Tibial artery (tissue), 4 donors: ENCODE measurements at regions of chr18 and their contacts with region 1.

Region 1: DNA sequence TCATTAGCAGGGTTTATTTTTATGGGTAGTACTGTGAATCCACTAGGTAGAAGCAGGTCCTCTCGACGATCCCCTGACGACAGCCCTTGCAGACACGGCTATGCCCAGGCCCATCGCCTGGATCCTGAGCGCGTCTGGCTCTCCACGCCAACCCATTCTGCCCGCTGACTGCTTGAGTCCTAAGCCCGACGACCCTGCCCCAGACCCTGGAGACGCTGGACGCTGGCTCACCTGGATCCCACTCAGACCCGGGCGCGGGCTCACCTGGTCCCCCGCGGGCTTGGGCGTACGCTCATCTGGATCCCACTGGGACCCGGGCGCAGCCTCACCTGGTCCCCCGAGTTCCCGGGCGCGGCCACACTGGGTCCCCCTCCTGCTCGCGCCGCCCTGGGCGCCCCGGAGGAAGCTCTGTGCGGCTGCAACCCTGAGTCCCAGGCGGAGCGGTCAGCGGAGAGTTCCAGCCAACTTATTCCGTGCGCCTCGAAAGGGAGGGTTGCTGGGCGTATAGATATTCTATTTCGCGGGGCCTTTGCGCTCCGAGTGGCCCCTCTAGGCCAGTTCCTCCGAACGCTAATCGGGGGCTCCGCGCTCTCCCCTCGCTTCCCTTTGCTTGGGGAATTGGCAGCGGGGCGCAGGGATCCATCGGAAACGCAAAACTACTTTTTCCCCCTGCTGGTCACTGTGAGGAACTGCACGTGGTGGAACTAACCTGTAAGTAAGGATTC is 22.4 kb upstream of the RMP24 start:
- DNase-seq: peak; percentile 26 to 70
- H3K4me3 ChIP-seq: peak overlapping the region; percentile 38 to 55
- H3K27ac ChIP-seq: no peak overlapping the region
- H3K4me1 ChIP-seq: peaks cover 0 to 8% (median 6%) of the 10 kb centered on the region in 4 donors
- H3K27me3 ChIP-seq: peaks cover 0 to 10% of the 10 kb centered on the region in 2 donors
- CTCF ChIP-seq: peak; percentile 87 to 91

Region 2: GRCh38 chr18:35386600-35387351 is 563.3 kb before region 1 on chr18:
- intact Hi-C with region 1: loop called (anchors 2 kb)
- DNase-seq: peak; percentile 66 to 72
- H3K4me3 ChIP-seq: no peak overlapping the region
- H3K27ac ChIP-seq: no peak overlapping the region
- H3K4me1 ChIP-seq: peaks cover 0 to 17% (median 2%) of the 10 kb centered on the region in 4 donors
- H3K27me3 ChIP-seq: no peaks in the 10 kb centered on the region
- CTCF ChIP-seq: peak; percentile 68 to 88

Region 3: GRCh38 chr18:35756506-35757117 is 193.5 kb before region 1 on chr18:
- intact Hi-C with region 1: loop called (anchors 2 kb)
- DNase-seq: no peak
- H3K4me3 ChIP-seq: no peak overlapping the region
- H3K27ac ChIP-seq: no peak overlapping the region
- H3K4me1 ChIP-seq: no peaks in the 10 kb centered on the region
- H3K27me3 ChIP-seq: peaks cover 0 to 16% of the 10 kb centered on the region in 2 donors
- CTCF ChIP-seq: peak; percentile 73

Region 4: GRCh38 chr18:36025025-36025424 is 75.0 kb after region 1 on chr18:
- intact Hi-C with region 1: no loop called
- DNase-seq: no peak
- H3K4me3 ChIP-seq: no peak overlapping the region
- H3K27ac ChIP-seq: no peak overlapping the region
- H3K4me1 ChIP-seq: no peaks in the 10 kb centered on the region
- H3K27me3 ChIP-seq: no peaks in the 10 kb centered on the region
- CTCF ChIP-seq: no peak